ENCODE measurements at regions of chr12 and their contacts with region 1.

Region 1: DNA sequence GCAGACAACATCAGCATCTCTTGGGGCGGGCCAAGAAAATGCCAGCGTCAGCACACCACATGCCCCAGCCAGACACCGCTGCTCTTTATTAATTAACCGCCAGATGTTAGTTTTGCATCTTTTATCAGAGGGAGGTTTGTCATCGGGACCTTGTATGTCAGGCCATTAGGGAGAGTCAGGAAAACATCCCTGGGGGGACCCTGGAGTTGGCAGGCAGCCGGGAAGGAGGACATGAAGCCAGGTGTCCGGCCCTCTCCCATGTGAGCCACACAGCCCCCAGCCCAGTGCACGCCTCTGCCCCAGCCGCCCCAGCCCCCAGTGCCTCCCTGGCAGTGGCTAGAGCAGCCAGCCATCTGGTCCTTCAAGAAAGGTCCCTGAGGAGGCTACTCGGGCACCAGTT is 56.9 kb upstream of the FAM222A start:
- DNase-seq: no peak
- H3K4me3 ChIP-seq: no peak overlapping the region
- H3K27ac ChIP-seq: no peak overlapping the region
- H3K4me1 ChIP-seq: no peaks in the 10 kb centered on the region
- H3K27me3 ChIP-seq: peaks cover 15% of the 10 kb centered on the region
- CTCF ChIP-seq: no peak

Region 2: GRCh38 chr12:109617491-109617890 is 39.3 kb before region 1 on chr12:
- dilution Hi-C with region 1: loop called (anchors 5 kb)
- DNase-seq: no peak
- H3K4me3 ChIP-seq: no peak overlapping the region
- H3K27ac ChIP-seq: no peak overlapping the region
- H3K4me1 ChIP-seq: no peaks in the 10 kb centered on the region
- H3K27me3 ChIP-seq: peaks cover 32% of the 10 kb centered on the region
- CTCF ChIP-seq: no peak